ENCODE measurements at regions of chr1 and their contacts with region 1.

Region 1: DNA sequence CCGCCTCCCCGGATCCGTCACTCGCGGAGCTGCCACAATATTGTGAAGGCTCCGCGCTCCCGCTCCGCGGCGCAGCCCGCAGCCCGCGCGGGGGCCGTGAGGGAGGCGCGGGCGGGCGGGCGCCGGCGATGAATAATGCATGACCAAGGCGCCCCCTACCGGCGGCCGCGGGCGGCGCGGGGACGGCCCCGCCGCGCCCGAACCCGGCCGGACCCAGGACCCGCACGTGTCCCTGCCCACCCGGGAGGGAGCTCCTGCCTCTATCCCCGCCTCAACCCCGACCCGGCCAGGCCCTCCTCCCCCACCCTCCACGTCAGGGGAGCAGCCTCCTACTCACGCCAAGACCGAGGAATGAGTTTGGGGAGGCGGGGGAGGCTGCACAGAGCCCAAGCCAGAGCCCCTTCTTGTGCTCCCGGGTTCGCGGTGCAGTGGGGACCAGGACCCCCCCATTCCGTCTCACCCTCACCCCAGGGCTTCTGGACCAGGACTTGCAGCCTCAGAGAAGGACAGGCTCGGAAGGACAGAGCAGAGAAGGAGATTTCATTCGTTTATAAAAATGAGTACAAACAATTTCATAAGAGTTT is 70.8 kb upstream of the CASZ1 start:
- DNase-seq: peak; percentile 36 to 79 (median 61)
- ATAC-seq: peak; percentile 93
- H3K4me3 ChIP-seq: peak overlapping the region; percentile 33
- H3K4me3 Mint-ChIP-seq: peak overlapping the region in 8 of 10 donors; percentile 43 to 81 (median 60)
- H3K27ac ChIP-seq: no peak overlapping the region
- H3K27ac Mint-ChIP-seq: peak overlapping the region in 1 of 9 donors; percentile 32
- H3K4me1 ChIP-seq: peaks cover 0 to 7% of the 10 kb centered on the region in 2 donors
- H3K4me1 Mint-ChIP-seq: peaks cover 8 to 32% (median 15%) of the 10 kb centered on the region in 7 donors
- H3K27me3 ChIP-seq: peaks cover 0 to 15% of the 10 kb centered on the region in 2 donors
- H3K27me3 Mint-ChIP-seq: peaks cover 51 to 74% (median 56%) of the 10 kb centered on the region in 5 donors

Region 2: GRCh38 chr1:10904396-10905358 is 37.4 kb after region 1 on chr1:
- CTCF ChIA-PET with region 1: no interaction called
- POLR2A ChIA-PET with region 1: no interaction called
- intact Hi-C with region 1: loop called in 1 of 2 experiments (anchors 2 kb)
- DNase-seq: peak in 6 of 9 donors; percentile 37 to 62 (median 56)
- ATAC-seq: peak; percentile 69
- H3K4me3 ChIP-seq: no peak overlapping the region
- H3K4me3 Mint-ChIP-seq: peak overlapping the region in 9 of 10 donors; percentile 45 to 85 (median 75)
- H3K27ac ChIP-seq: no peak overlapping the region
- H3K27ac Mint-ChIP-seq: peak overlapping the region in 8 of 9 donors; percentile 20 to 94 (median 72)
- H3K4me1 ChIP-seq: peaks cover 12 to 32% of the 10 kb centered on the region in 2 donors
- H3K4me1 Mint-ChIP-seq: peaks cover 3 to 47% (median 35%) of the 10 kb centered on the region in 7 donors
- H3K27me3 ChIP-seq: no peaks in the 10 kb centered on the region
- H3K27me3 Mint-ChIP-seq: peaks cover 0 to 15% (median 0%) of the 10 kb centered on the region in 5 donors

Region 3: GRCh38 chr1:10941891-10942541 is 74.8 kb after region 1 on chr1:
- CTCF ChIA-PET with region 1: no interaction called
- POLR2A ChIA-PET with region 1: no interaction called
- intact Hi-C with region 1: loop called (anchors 1 to 2 kb)
- DNase-seq: peak; percentile 23 to 75 (median 53)
- ATAC-seq: peak; percentile 78
- H3K4me3 ChIP-seq: no peak overlapping the region
- H3K4me3 Mint-ChIP-seq: peak overlapping the region in 1 of 10 donors; percentile 21
- H3K27ac ChIP-seq: no peak overlapping the region
- H3K27ac Mint-ChIP-seq: no peak overlapping the region
- H3K4me1 ChIP-seq: peaks cover 11 to 29% of the 10 kb centered on the region in 2 donors
- H3K4me1 Mint-ChIP-seq: peaks cover 20 to 49% (median 32%) of the 10 kb centered on the region in 7 donors
- H3K27me3 ChIP-seq: no peaks in the 10 kb centered on the region
- H3K27me3 Mint-ChIP-seq: peaks cover 19 to 72% (median 21%) of the 10 kb centered on the region in 5 donors